CD4-positive, alpha-beta memory T cell (primary cell): ENCODE measurements at regions of chr15 and their contacts with region 1.

Region 1: GRCh38 chr15:52227456-52227855 is 36.3 kb upstream of the GNB5 start:
- DNase-seq: peak; percentile 68 to 78 (median 69)
- H3K4me3 ChIP-seq: no peak overlapping the region
- H3K4me3 Mint-ChIP-seq: no peak overlapping the region
- H3K27ac ChIP-seq: no peak overlapping the region
- H3K27ac Mint-ChIP-seq: peak overlapping the region in 1 of 7 donors; percentile 60
- H3K4me1 ChIP-seq: peaks cover 8% of the 10 kb centered on the region
- H3K4me1 Mint-ChIP-seq: peaks cover 10 to 21% (median 14%) of the 10 kb centered on the region in 4 donors
- H3K27me3 ChIP-seq: no peaks in the 10 kb centered on the region
- H3K27me3 Mint-ChIP-seq: no peaks in the 10 kb centered on the region

Region 2: GRCh38 chr15:51888593-51889195 is 338.8 kb before region 1 on chr15:
- CTCF ChIA-PET with region 1: interaction called, 3 read pairs
- POLR2A ChIA-PET with region 1: no interaction called
- intact Hi-C with region 1: loop called (anchors 2 kb)
- DNase-seq: peak in 3 of 5 donors; percentile 8 to 20 (median 19)
- H3K4me3 ChIP-seq: no peak overlapping the region
- H3K4me3 Mint-ChIP-seq: no peak overlapping the region
- H3K27ac ChIP-seq: no peak overlapping the region
- H3K27ac Mint-ChIP-seq: peak overlapping the region in 2 of 7 donors; percentile 0 to 13
- H3K4me1 ChIP-seq: no peaks in the 10 kb centered on the region
- H3K4me1 Mint-ChIP-seq: peaks cover 6 to 16% (median 7%) of the 10 kb centered on the region in 4 donors
- H3K27me3 ChIP-seq: no peaks in the 10 kb centered on the region
- H3K27me3 Mint-ChIP-seq: no peaks in the 10 kb centered on the region

Region 3: GRCh38 chr15:52069559-52069958 is 157.9 kb before region 1 on chr15:
- CTCF ChIA-PET with region 1: no interaction called
- POLR2A ChIA-PET with region 1: no interaction called
- intact Hi-C with region 1: no loop called
- DNase-seq: no peak
- H3K4me3 ChIP-seq: no peak overlapping the region
- H3K4me3 Mint-ChIP-seq: no peak overlapping the region
- H3K27ac ChIP-seq: no peak overlapping the region
- H3K27ac Mint-ChIP-seq: no peak overlapping the region
- H3K4me1 ChIP-seq: peaks cover 7% of the 10 kb centered on the region
- H3K4me1 Mint-ChIP-seq: peaks cover 9 to 12% (median 11%) of the 10 kb centered on the region in 4 donors
- H3K27me3 ChIP-seq: no peaks in the 10 kb centered on the region
- H3K27me3 Mint-ChIP-seq: no peaks in the 10 kb centered on the region

Region 4: GRCh38 chr15:52124270-52124880 is 103.1 kb before region 1 on chr15:
- CTCF ChIA-PET with region 1: no interaction called
- POLR2A ChIA-PET with region 1: no interaction called
- intact Hi-C with region 1: no loop called
- DNase-seq: no peak
- H3K4me3 ChIP-seq: no peak overlapping the region
- H3K4me3 Mint-ChIP-seq: no peak overlapping the region
- H3K27ac ChIP-seq: no peak overlapping the region
- H3K27ac Mint-ChIP-seq: peak overlapping the region in 2 of 7 donors; percentile 2 to 19
- H3K4me1 ChIP-seq: no peaks in the 10 kb centered on the region
- H3K4me1 Mint-ChIP-seq: no peaks in the 10 kb centered on the region
- H3K27me3 ChIP-seq: no peaks in the 10 kb centered on the region
- H3K27me3 Mint-ChIP-seq: no peaks in the 10 kb centered on the region

Region 5: GRCh38 chr15:52139599-52140491 is 87.6 kb before region 1 on chr15:
- CTCF ChIA-PET with region 1: interaction called, 8 read pairs
- POLR2A ChIA-PET with region 1: no interaction called
- intact Hi-C with region 1: loop called (anchors 5 kb)
- DNase-seq: peak; percentile 42 to 60 (median 46)
- H3K4me3 ChIP-seq: no peak overlapping the region
- H3K4me3 Mint-ChIP-seq: peak overlapping the region in 1 of 8 donors; percentile 26
- H3K27ac ChIP-seq: no peak overlapping the region
- H3K27ac Mint-ChIP-seq: peak overlapping the region in 4 of 7 donors; percentile 61 to 70 (median 66)
- H3K4me1 ChIP-seq: peaks cover 22% of the 10 kb centered on the region
- H3K4me1 Mint-ChIP-seq: peaks cover 18 to 32% (median 27%) of the 10 kb centered on the region in 4 donors
- H3K27me3 ChIP-seq: no peaks in the 10 kb centered on the region
- H3K27me3 Mint-ChIP-seq: no peaks in the 10 kb centered on the region

Region 6: DNA sequence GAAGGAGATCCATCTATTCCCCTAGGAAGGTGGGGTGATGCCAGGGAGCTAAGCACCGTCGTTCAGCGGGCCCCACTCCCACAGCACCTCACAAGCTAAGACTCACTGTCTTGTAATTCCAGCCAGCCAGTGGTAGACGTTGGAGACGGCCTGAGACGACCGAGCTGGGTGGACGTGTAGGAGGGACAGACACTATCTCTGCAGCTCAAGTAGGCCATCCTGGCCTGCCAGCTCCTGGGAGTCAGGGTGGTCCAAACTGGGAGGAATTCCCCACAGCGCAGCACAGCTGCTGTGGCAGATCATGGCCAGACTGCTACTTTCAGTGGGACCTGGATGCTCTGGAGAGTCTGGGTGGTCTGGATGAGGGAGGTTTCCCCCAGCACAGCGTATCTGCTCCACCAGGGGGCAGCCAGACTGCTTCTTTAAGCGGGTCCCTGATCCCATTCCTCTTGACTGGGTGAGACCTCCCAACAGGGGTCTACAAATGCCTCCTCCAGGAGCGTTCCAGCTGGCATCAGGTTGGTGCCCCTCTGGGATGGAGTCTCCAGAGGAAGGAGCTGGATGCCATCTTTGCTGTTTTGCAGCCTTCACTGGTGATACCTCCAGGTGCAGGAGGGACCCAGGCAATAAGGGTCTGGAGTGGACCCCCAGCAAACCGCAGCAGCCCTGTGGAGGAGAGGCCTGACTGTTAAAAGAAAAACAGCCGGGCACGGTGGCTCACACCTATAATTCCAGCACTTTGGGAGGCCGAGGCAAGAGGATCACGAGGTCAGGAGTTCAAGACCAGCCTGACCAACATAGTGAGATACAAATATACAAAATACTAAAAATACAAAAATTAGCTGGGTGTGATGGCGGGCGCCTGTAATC is 63.9 kb before region 1 on chr15:
- CTCF ChIA-PET with region 1: interaction called, 16 read pairs
- POLR2A ChIA-PET with region 1: no interaction called
- intact Hi-C with region 1: loop called (anchors 1 kb)
- DNase-seq: no peak
- H3K4me3 ChIP-seq: no peak overlapping the region
- H3K4me3 Mint-ChIP-seq: no peak overlapping the region
- H3K27ac ChIP-seq: no peak overlapping the region
- H3K27ac Mint-ChIP-seq: peak overlapping the region in 1 of 7 donors; percentile 20
- H3K4me1 ChIP-seq: peaks cover 4% of the 10 kb centered on the region
- H3K4me1 Mint-ChIP-seq: peaks cover 29 to 44% (median 36%) of the 10 kb centered on the region in 4 donors
- H3K27me3 ChIP-seq: no peaks in the 10 kb centered on the region
- H3K27me3 Mint-ChIP-seq: no peaks in the 10 kb centered on the region

Region 7: GRCh38 chr15:52217186-52217585 is 10.3 kb before region 1 on chr15:
- CTCF ChIA-PET with region 1: interaction called, 50 read pairs
- POLR2A ChIA-PET with region 1: interaction called, 7 read pairs
- intact Hi-C with region 1: no loop called
- DNase-seq: no peak
- H3K4me3 ChIP-seq: no peak overlapping the region
- H3K4me3 Mint-ChIP-seq: no peak overlapping the region
- H3K27ac ChIP-seq: no peak overlapping the region
- H3K27ac Mint-ChIP-seq: no peak overlapping the region
- H3K4me1 ChIP-seq: peaks cover 21% of the 10 kb centered on the region
- H3K4me1 Mint-ChIP-seq: peaks cover 13 to 29% (median 19%) of the 10 kb centered on the region in 4 donors
- H3K27me3 ChIP-seq: no peaks in the 10 kb centered on the region
- H3K27me3 Mint-ChIP-seq: peaks cover 0 to 1% of the 10 kb centered on the region in 2 donors